Psoas muscle (tissue), 8 donors: ENCODE measurements at regions of chrX and their contacts with region 1.

Region 1: DNA sequence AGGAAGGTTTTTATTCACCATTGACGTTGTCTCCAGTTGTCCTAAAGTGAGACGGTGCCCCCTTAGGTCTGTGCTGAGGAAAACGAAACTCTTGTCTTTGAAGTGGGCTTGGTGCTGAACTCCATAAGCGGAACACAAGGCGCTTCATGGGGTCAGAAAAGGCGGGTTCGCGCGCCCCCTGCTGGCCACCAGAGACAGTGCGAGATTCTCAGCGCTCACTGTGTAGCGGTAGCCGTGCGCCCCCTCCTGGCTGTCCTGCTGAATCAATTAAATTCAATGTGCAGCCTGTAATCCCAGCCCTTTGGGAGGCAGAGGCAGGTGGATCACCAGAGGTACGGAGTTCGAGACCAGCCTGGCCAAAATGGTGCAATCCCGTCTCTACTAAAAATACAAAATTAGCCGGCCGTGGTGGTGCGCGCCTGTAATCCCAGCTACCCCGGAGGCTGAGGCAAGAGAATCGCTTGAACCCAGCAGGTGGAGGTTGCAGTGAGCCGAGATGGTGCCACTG is 64.1 kb downstream of the RLIM start:
- DNase-seq: peak; percentile 84 to 92
- ATAC-seq: peak; percentile 93 to 98 (median 95)
- H3K4me3 ChIP-seq: no peak overlapping the region
- H3K27ac ChIP-seq: no peak overlapping the region
- H3K4me1 ChIP-seq: no peaks in the 10 kb centered on the region
- H3K27me3 ChIP-seq: peaks cover 0 to 8% (median 0%) of the 10 kb centered on the region in 3 donors
- CTCF ChIP-seq: peak; percentile 93

Region 2: GRCh38 chrX:74382613-74383012 is 167.7 kb before region 1 on chrX:
- intact Hi-C with region 1: loop called in 1 of 2 experiments (anchors 2 kb)
- DNase-seq: peak; percentile 28 to 68
- ATAC-seq: peak; percentile 79 to 92 (median 84)
- H3K4me3 ChIP-seq: no peak overlapping the region
- H3K27ac ChIP-seq: no peak overlapping the region
- H3K4me1 ChIP-seq: no peaks in the 10 kb centered on the region
- H3K27me3 ChIP-seq: peaks cover 0 to 15% (median 0%) of the 10 kb centered on the region in 3 donors
- CTCF ChIP-seq: peak; percentile 74